ENCODE measurements at regions of chr12 and their contacts with region 1.

Region 1: DNA sequence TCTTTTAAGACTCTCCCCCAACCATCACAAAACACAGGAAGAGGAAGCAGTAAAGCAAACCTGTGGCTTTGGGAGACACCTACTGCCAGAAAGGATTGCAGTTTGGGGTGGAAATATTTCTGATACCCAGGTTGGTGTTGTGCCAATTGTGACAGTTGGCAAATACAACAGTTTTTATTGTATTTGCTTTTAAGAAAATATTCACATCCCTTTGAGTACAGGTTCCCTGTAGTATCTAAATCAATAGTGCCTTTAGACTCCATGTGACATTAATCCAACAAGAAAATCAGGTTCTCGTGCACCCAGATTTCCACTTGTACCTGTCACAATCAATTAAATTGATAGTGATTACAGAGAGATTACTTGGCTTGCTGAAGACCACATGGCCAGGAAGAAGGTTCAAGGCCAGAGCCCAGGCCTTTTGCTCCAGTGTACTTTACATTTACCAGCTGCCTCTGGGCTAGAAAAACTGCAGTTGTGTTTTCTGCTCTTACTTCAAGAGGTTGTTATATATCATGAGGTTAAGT is 361.2 kb downstream of the ATP23 start:
- DNase-seq: peak; percentile 9
- H3K4me3 ChIP-seq: no peak overlapping the region
- H3K27ac ChIP-seq: no peak overlapping the region
- H3K4me1 ChIP-seq: peaks cover 3% of the 10 kb centered on the region
- H3K27me3 ChIP-seq: no peaks in the 10 kb centered on the region
- CTCF ChIP-seq: peak in 1 of 2 donors; percentile 35

Region 2: GRCh38 chr12:58105225-58106119 is 197.1 kb before region 1 on chr12:
- CTCF ChIA-PET with region 1: no interaction called
- dilution Hi-C with region 1: no loop called
- in situ Hi-C with region 1: no loop called
- intact Hi-C with region 1: loop called (anchors 10 kb)
- DNase-seq: peak; percentile 3
- H3K4me3 ChIP-seq: no peak overlapping the region
- H3K27ac ChIP-seq: no peak overlapping the region
- H3K4me1 ChIP-seq: no peaks in the 10 kb centered on the region
- H3K27me3 ChIP-seq: no peaks in the 10 kb centered on the region
- CTCF ChIP-seq: peak; percentile 38 to 60

Region 3: DNA sequence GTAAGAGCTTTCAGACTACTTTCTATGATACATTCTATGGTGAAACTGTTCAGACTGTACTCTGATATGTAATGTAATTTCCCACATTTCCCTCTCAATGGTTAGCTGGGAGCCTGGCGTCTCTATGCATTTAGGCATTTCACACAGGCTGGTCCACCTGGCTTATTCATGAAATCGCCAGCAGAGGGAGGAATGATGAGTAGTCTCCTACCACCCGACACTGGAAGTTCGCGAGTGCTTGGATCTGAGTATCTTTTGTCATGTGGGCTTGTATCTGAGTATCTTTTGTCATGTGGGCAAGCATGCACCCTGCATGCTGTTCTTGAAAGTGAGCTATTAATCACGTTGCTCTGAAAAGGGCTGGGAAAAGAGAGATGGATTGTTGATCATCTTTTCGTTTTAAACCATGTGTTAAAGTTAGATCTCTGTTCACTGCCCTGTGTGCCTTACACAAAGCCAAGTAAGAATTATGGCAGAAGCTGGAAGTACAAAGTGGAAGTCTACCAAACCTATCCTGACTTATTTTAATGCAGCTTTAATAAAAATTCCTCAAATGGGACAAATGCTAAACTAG is 126.2 kb before region 1 on chr12:
- CTCF ChIA-PET with region 1: no interaction called
- dilution Hi-C with region 1: no loop called
- in situ Hi-C with region 1: no loop called
- intact Hi-C with region 1: loop called (anchors 10 kb)
- DNase-seq: peak; percentile 6
- H3K4me3 ChIP-seq: no peak overlapping the region
- H3K27ac ChIP-seq: no peak overlapping the region
- H3K4me1 ChIP-seq: no peaks in the 10 kb centered on the region
- H3K27me3 ChIP-seq: no peaks in the 10 kb centered on the region
- CTCF ChIP-seq: peak; percentile 46 to 53

Region 4: GRCh38 chr12:58408516-58408915 is 106.0 kb after region 1 on chr12:
- CTCF ChIA-PET with region 1: no interaction called
- dilution Hi-C with region 1: no loop called
- in situ Hi-C with region 1: no loop called
- intact Hi-C with region 1: no loop called
- DNase-seq: no peak
- H3K4me3 ChIP-seq: no peak overlapping the region
- H3K27ac ChIP-seq: no peak overlapping the region
- H3K4me1 ChIP-seq: peaks cover under 1% of the 10 kb centered on the region
- H3K27me3 ChIP-seq: no peaks in the 10 kb centered on the region
- CTCF ChIP-seq: no peak